ENCODE measurements at regions of chr1 and their contacts with region 1.

Region 1: GRCh38 chr1:167268398-167268787 is 47.7 kb downstream of the POU2F1 start:
- DNase-seq: no peak
- H3K4me3 ChIP-seq: no peak overlapping the region
- H3K27ac ChIP-seq: no peak overlapping the region
- H3K4me1 ChIP-seq: no peaks in the 10 kb centered on the region
- H3K27me3 ChIP-seq: no peaks in the 10 kb centered on the region
- CTCF ChIP-seq: no peak
- POLR2A ChIP-seq: no peak

Region 2: GRCh38 chr1:166785987-166786386 is 482.4 kb before region 1 on chr1:
- intact Hi-C with region 1: no loop called
- DNase-seq: no peak
- H3K4me3 ChIP-seq: no peak overlapping the region
- H3K27ac ChIP-seq: no peak overlapping the region
- H3K4me1 ChIP-seq: no peaks in the 10 kb centered on the region
- H3K27me3 ChIP-seq: no peaks in the 10 kb centered on the region
- CTCF ChIP-seq: no peak
- POLR2A ChIP-seq: no peak

Region 3: GRCh38 chr1:167442124-167442848 is 173.9 kb after region 1 on chr1:
- intact Hi-C with region 1: loop called (anchors 5 kb)
- DNase-seq: peak; percentile 83
- H3K4me3 ChIP-seq: no peak overlapping the region
- H3K27ac ChIP-seq: no peak overlapping the region
- H3K4me1 ChIP-seq: no peaks in the 10 kb centered on the region
- H3K27me3 ChIP-seq: peaks cover 2% of the 10 kb centered on the region
- CTCF ChIP-seq: peak; percentile 58 to 90 (median 83)
- POLR2A ChIP-seq: no peak

Region 4: DNA sequence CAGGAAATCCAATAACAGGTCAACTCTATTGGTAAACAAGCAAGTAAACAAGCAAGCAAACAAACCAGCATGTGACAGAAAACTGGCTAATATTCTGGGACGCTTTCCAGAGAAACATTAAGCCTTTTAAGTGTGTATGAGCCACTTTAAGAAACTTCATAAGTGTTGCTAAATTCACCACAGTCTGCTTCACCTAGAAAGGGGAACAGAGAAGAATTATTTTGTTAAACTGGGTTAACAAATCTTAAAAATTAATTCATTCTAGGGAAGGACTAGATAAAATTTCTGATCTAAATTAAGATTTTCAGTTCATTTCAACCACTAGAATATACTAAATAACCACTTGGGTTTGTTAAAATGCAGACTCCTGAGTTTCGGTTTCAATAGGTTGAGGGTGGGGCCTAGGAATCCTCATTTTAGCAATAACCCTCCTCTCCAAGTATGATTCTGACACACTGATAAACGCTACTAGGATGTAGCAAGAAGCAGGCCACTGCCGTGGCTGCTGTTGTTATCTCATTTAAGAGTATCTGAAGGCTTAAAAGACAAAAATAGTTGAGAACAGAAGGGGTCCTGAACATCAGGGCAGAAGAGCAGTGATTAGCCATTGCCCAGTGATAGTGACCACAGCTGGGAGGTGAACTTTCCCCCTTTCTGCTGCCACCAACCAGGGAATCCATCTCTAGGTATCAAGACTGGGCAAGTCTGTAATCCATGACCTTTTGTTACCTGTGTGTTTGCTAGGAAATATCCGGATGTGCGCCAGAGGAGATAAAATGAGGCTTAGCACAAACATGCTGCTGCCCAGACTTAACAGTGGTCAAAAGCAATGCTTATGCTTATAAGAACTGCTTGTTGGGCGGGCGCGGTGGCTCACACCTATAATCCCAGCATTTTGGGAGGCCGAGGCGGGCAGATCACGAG is 274.0 kb after region 1 on chr1:
- intact Hi-C with region 1: loop called (anchors 5 kb)
- DNase-seq: no peak
- H3K4me3 ChIP-seq: no peak overlapping the region
- H3K27ac ChIP-seq: no peak overlapping the region
- H3K4me1 ChIP-seq: no peaks in the 10 kb centered on the region
- H3K27me3 ChIP-seq: no peaks in the 10 kb centered on the region
- CTCF ChIP-seq: no peak
- POLR2A ChIP-seq: no peak

Measured in prostate gland (tissue), 2 donors.